Breast epithelium (tissue), 4 donors: ENCODE measurements at regions of chr17 and their contacts with region 1.

Region 1: DNA sequence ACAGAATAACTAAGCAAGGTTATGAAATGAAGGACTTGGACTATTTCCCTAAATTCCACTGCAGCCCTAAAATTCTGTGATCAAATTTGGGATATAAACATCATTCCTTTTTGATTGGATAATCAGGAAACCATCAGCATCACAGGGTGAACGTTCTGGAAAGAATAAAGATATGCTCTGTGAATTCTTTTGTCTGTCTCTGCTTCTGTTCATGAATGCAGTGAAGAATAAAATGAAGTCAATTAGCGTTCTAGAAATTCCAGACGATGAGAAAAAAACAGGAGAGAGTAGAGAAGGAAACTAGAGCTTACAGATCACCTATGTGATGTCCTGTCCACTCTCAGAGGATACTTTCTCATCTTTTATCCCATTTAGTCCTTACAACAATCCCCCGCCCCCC is 295.1 kb upstream of the SOX9 start:
- DNase-seq: no peak
- H3K4me3 ChIP-seq: no peak overlapping the region
- H3K27ac ChIP-seq: no peak overlapping the region
- H3K4me1 ChIP-seq: no peaks in the 10 kb centered on the region
- H3K27me3 ChIP-seq: peaks cover 0 to 5% of the 10 kb centered on the region in 2 donors
- CTCF ChIP-seq: no peak
- POLR2A ChIP-seq: no peak

Region 2: DNA sequence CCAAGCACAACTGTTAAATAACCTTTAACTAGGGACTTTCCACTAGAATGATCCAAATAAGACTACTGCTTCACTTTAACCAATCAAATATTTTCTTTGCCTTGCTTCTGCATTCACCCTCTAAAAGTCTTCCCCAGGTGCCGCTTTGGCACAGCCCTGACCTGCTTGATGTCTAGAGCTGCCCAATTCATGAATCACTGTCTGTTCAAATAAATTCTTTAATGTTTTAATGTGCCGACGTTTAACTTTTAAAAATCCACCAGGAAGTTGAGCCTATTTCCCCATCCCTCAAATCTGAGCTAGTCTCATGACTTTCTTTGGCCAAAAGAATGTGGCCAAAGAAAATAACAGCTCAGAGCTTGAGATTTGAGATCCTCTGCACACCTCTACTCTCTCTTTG is 17.3 kb after region 1 on chr17:
- intact Hi-C with region 1: no loop called
- DNase-seq: no peak
- H3K4me3 ChIP-seq: no peak overlapping the region
- H3K27ac ChIP-seq: no peak overlapping the region
- H3K4me1 ChIP-seq: no peaks in the 10 kb centered on the region
- H3K27me3 ChIP-seq: no peaks in the 10 kb centered on the region
- CTCF ChIP-seq: no peak
- POLR2A ChIP-seq: no peak

Region 3: DNA sequence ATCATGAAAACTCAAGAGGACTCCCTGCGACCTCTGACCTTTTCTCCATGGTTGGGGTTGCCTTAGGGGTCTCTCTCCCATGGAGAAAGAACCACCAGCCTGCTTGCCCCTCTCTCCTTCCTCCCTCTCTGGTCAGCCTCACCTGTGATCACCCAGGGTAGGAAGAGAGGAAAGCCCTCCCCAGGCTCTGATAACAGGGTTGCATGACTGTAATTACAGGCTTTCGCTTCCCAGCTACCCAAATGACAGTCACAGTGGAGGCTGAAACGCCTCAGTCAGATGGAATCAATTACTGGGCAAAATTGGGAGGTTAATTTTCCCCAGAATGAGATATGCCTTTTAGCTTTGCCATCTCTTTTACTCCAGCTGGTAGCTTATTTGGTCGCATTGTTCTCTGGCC is 29.3 kb after region 1 on chr17:
- intact Hi-C with region 1: loop called (anchors 2 kb)
- DNase-seq: no peak
- H3K4me3 ChIP-seq: no peak overlapping the region
- H3K27ac ChIP-seq: no peak overlapping the region
- H3K4me1 ChIP-seq: no peaks in the 10 kb centered on the region
- H3K27me3 ChIP-seq: no peaks in the 10 kb centered on the region
- CTCF ChIP-seq: no peak
- POLR2A ChIP-seq: no peak